Panc1 (cell line): ENCODE measurements at regions of chr3 and their contacts with region 1.

Region 1: GRCh38 chr3:188776447-188776846 is 395.3 kb upstream of the TPRG1 start:
- DNase-seq: no peak
- ATAC-seq: no peak
- H3K4me3 ChIP-seq: no peak overlapping the region
- H3K27ac ChIP-seq: no peak overlapping the region
- H3K4me1 ChIP-seq: no peaks in the 10 kb centered on the region
- H3K27me3 ChIP-seq: no peaks in the 10 kb centered on the region
- CTCF ChIP-seq: no peak

Region 2: DNA sequence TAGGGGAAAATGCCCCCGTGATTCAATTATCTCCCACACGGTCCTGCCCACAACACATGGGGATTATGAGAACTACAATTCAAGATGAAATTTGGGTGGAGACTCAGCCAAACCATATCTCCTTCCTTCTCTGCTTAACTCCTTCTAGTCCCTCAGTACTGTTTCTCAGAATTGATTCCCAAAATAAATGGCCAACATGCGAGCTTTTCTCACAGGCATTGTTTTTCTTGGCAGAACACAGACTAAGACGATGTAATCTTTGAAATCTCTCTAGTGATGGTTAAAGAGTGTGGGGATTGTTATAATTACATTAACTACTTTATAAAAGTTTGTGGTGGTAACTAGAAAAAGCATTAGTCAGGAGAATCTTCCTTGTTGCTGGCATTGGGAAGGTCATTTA is 256.0 kb before region 1 on chr3:
- CTCF ChIA-PET with region 1: no interaction called
- POLR2A ChIA-PET with region 1: no interaction called
- in situ Hi-C with region 1: no loop called
- intact Hi-C with region 1: no loop called
- DNase-seq: no peak
- ATAC-seq: no peak
- H3K4me3 ChIP-seq: no peak overlapping the region
- H3K27ac ChIP-seq: no peak overlapping the region
- H3K4me1 ChIP-seq: no peaks in the 10 kb centered on the region
- H3K27me3 ChIP-seq: no peaks in the 10 kb centered on the region
- CTCF ChIP-seq: no peak

Region 3: GRCh38 chr3:188749010-188749617 is 27.3 kb before region 1 on chr3:
- CTCF ChIA-PET with region 1: no interaction called
- POLR2A ChIA-PET with region 1: no interaction called
- in situ Hi-C with region 1: no loop called
- intact Hi-C with region 1: no loop called
- DNase-seq: peak; percentile 25
- ATAC-seq: peak; percentile 51; the same call in 1 of the 2 replicates
- H3K4me3 ChIP-seq: no peak overlapping the region
- H3K27ac ChIP-seq: no peak overlapping the region
- H3K4me1 ChIP-seq: no peaks in the 10 kb centered on the region
- H3K27me3 ChIP-seq: no peaks in the 10 kb centered on the region
- CTCF ChIP-seq: peak; percentile 78

Region 4: GRCh38 chr3:188796122-188796631 is 19.7 kb after region 1 on chr3:
- CTCF ChIA-PET with region 1: no interaction called
- POLR2A ChIA-PET with region 1: interaction called, 12 read pairs
- in situ Hi-C with region 1: no loop called
- intact Hi-C with region 1: no loop called
- DNase-seq: no peak
- ATAC-seq: no peak
- H3K4me3 ChIP-seq: no peak overlapping the region
- H3K27ac ChIP-seq: no peak overlapping the region
- H3K4me1 ChIP-seq: no peaks in the 10 kb centered on the region
- H3K27me3 ChIP-seq: no peaks in the 10 kb centered on the region
- CTCF ChIP-seq: no peak

Region 5: DNA sequence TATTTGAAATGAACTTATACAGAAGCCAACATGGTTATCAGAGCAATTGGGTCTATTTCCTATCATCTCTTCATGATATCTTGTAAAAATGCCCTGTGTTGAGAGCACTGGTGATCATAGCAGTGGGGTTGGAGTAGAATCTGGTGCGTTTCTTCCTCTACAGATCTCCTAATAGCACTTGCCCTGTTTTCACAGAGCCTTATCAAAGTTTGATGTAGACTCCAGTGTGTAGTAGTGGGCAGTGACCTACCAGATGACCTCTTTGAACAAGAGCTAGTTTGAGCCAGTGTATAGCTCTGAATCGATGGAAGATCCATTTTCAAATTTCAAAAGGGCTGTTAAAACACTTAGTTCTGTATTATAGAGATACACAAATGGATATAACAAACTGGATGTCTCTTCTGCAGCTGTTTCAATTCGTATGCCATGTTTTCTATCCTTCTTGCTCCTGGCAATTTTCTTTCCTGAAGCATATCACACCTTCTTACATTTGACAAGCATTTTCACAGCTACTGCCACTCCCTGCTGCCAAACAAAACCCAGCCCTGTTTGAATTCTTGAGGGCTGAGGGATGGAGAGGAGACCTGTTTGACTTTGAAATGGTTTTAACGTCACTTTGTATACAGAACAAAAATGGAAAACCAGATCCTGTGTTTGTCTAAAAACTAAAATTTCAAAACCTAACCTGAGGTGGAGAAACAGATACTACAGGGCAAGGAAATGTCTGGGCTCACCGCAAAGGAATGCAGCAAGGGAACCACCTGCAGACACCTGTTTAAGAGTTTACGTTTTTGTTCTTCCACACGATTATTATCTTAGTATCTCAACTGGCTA is 40.9 kb after region 1 on chr3:
- CTCF ChIA-PET with region 1: no interaction called
- POLR2A ChIA-PET with region 1: no interaction called
- in situ Hi-C with region 1: no loop called
- intact Hi-C with region 1: no loop called
- DNase-seq: no peak
- ATAC-seq: no peak
- H3K4me3 ChIP-seq: no peak overlapping the region
- H3K27ac ChIP-seq: no peak overlapping the region
- H3K4me1 ChIP-seq: no peaks in the 10 kb centered on the region
- H3K27me3 ChIP-seq: no peaks in the 10 kb centered on the region
- CTCF ChIP-seq: no peak